ENCODE measurements at regions of chr6 and their contacts with region 1.

Region 1: DNA sequence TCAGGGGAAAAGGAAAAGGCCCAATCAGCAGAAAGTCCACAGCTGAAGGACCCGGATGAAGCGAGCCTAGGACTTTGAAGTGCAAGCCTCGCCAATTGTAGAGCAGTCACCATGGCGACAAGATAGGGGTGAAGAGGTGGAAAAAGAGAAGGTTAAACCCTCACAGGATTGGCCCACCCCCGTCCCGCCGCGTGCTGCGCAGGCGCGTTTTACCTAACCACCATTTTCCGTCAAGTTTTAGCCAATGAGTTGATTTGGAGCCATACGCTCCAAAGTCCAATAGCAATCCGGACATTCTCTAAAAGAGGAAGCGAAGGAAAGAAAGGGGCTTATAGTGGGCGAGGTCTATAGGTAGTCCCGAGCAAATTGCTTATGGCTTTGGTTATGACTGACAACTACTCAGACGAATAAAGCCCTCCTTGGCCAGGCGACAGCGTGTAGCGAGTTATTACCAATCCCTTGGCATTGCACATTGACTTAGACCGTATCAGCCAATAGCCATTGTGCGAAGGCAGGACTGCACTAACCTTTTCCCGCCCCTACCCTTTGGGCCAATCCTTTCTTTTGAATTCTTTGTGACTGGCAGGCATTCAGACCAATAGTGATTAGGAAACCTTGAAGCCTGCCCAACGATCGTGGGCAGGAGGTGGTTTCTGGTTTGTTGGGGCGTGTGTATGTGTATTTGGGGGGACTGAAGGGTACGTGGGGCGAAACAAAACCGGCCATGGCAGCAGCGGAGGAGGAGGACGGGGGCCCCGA is at the start of gene RNF5:
- DNase-seq: peak; percentile 97 to 99
- H3K4me3 ChIP-seq: peak within 1 kb of the TSS; percentile 87
- H3K4me3 Mint-ChIP-seq: peak within 1 kb of the TSS; percentile 81
- H3K27ac Mint-ChIP-seq: peak within 1 kb of the TSS; percentile 94
- H3K4me1 ChIP-seq: peaks cover 15% of the 10 kb centered on the region
- H3K4me1 Mint-ChIP-seq: peaks cover 46% of the 10 kb centered on the region
- H3K27me3 ChIP-seq: no peaks in the 10 kb centered on the region
- H3K27me3 Mint-ChIP-seq: no peaks in the 10 kb centered on the region
- CTCF ChIP-seq: no peak
- total RNA-seq, gene RNF5: 64.7 and 70.7 TPM in 2 replicates

Region 2: DNA sequence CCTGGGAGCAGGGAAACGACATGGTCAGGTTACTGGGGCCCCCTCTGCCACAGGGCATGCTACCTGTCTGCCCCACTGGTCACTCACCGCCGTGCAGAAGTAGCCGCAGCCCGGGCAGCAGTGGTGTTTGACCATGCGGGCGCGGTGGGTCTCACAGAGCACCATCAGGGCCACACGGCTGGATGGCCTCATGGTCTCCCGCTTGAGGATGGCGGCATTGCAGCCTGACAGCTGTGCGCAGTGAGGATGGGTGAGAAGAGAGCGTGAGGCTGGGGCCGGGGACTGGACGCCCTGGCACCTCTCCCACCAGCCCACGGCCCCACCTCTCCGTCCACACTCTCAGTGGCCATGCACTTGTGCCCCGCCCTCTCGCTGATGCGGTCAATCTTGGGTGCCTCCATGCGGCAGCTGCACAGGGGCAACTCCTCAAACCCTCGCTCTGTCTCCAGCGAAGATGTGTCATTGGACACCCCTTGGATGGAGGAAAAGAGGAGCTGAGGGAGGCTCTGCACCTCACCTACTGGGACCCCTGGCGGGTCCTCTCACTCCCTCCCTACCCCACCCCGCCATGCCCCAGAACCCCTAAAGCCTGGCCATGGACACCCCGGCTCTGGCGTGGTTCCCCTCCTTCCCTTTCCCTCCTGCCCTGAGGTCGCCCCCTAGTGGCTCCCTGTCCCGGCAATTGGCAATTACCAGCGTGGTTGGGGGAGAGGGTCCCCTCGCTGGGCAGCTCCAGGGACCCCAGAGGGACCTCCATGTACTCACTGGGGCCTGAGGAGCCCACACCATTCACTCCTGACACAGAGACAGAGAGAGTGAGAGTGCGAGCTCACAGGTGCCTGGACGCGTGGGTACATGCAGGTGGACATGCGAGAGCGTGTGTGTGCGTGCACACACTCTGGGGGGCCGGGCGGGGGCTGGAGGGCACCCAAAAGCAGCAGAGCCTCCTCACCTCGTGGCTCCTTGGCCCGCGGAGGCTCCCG is 289.4 kb before region 1 on chr6:
- CTCF ChIA-PET with region 1: no interaction called
- POLR2A ChIA-PET with region 1: no interaction called
- intact Hi-C with region 1: no loop called
- DNase-seq: peak in 1 of 2 experiments; percentile 54
- H3K4me3 ChIP-seq: no peak overlapping the region
- H3K4me3 Mint-ChIP-seq: no peak overlapping the region
- H3K27ac Mint-ChIP-seq: no peak overlapping the region
- H3K4me1 ChIP-seq: no peaks in the 10 kb centered on the region
- H3K4me1 Mint-ChIP-seq: no peaks in the 10 kb centered on the region
- H3K27me3 ChIP-seq: no peaks in the 10 kb centered on the region
- H3K27me3 Mint-ChIP-seq: no peaks in the 10 kb centered on the region
- CTCF ChIP-seq: peak; percentile 73

Region 3: DNA sequence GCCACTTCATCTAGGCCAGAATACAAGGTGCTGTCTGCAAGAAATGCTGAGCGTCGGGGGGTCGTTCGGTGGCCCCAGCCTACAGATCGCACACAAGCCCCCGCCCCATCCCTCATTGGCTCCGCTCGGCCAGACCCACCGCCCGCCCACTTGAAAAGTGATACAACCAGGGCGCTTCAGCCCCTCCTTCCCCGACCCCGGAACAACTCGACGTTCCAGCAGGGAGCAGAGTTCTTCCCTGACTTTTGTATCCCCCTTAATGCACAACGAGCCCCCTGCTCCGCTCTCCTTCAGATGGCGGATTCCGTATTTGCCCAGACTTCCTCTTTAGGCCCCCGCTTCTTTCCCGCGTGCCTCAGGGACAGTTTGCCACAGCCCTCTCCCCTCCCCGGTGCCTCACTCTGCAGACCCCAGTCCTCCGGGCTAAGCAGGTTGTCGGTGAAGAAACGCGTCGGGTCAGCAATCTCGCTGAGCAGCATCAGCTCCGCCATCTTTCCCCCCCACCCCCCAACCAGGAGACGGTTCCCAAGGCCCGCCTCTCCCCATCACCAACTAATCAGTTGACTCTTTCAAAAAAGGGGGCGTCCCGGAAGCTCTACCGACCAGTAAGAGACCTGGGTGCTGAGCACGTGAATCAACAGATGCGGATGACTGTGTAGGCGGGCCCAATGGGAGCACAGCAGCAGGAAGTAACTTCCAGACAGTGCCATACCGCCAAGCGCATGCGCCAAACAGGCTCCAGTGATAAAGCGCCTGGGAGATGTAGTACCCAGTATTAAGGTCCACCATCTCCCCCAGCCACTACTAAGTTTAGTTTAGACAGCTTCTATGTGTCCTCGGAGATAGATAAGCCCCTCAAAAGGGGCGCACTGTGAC is 50.0 kb before region 1 on chr6 and contains the start of gene ATF6B:
- CTCF ChIA-PET with region 1: interaction called, 3 read pairs
- POLR2A ChIA-PET with region 1: interaction called, 4 read pairs
- intact Hi-C with region 1: loop called (anchors 1 kb)
- DNase-seq: peak; percentile 96 to 99
- H3K4me3 ChIP-seq: peak within 1 kb of the TSS; percentile 75
- H3K4me3 Mint-ChIP-seq: peak within 1 kb of the TSS; percentile 99
- H3K27ac Mint-ChIP-seq: peak within 1 kb of the TSS; percentile 99
- H3K4me1 ChIP-seq: peaks cover 17% of the 10 kb centered on the region
- H3K4me1 Mint-ChIP-seq: peaks cover 26% of the 10 kb centered on the region
- H3K27me3 ChIP-seq: no peaks in the 10 kb centered on the region
- H3K27me3 Mint-ChIP-seq: no peaks in the 10 kb centered on the region
- CTCF ChIP-seq: no peak
- total RNA-seq, gene ATF6B: 61.5 and 64.9 TPM in 2 replicates

Region 4: DNA sequence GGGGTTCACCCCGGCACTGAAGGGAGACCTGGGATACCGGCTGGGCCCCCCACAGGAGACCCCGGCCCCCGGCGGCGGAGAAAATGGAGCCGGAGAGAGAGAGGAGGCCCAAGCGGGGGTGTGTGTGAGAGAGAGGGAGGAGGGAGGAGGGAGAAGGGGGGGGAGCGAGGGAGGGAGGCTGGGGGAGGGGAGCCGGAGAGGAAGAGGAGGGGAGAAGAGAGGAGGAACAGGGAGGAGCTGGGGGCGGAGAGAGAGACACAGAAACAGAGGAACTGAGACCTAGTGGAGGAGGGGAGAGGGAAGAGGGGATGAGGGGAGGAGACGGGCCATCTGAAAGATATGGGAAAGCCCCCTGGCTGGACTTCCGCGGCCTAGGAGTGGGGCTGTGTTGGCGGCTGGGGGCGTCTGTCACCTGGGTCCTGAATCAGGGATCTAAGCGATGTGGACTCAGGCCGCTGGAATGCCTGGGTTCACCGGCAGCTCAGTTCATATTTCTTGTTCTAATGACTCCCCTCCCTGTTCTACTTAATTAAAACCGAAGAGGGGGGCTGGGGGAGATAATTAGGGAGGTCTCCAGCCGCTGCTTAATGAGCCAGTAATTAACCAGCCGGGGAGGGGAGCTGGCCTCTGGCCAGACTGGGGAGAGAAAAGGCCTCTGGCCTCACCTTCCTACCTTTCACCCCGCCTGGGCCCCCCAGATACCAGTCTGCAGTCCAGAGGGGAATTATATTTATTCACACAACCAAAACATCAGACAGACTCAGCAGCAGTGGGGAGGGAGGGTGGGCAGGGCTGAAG is 12.3 kb after region 1 on chr6 and contains the start of gene PBX2:
- CTCF ChIA-PET with region 1: interaction called, 24 read pairs
- POLR2A ChIA-PET with region 1: interaction called, 29 read pairs
- intact Hi-C with region 1: loop called (anchors 1 kb)
- DNase-seq: peak; percentile 71 to 87
- H3K4me3 ChIP-seq: peak within 1 kb of the TSS; percentile 62
- H3K4me3 Mint-ChIP-seq: peak within 1 kb of the TSS; percentile 83
- H3K27ac Mint-ChIP-seq: peak within 1 kb of the TSS; percentile 90
- H3K4me1 ChIP-seq: peaks cover 19% of the 10 kb centered on the region
- H3K4me1 Mint-ChIP-seq: peaks cover 30% of the 10 kb centered on the region
- H3K27me3 ChIP-seq: no peaks in the 10 kb centered on the region
- H3K27me3 Mint-ChIP-seq: no peaks in the 10 kb centered on the region
- CTCF ChIP-seq: no peak
- total RNA-seq, gene PBX2: 96.3 and 96.5 TPM in 2 replicates

Measured in Caco-2 (cell line).